ENCODE measurements at regions of chr17 and their contacts with region 1.

Region 1: GRCh38 chr17:72358465-72358864 is 237.6 kb downstream of the SOX9 start:
- DNase-seq: no peak
- H3K4me3 ChIP-seq: no peak overlapping the region
- H3K27ac ChIP-seq: no peak overlapping the region
- H3K27me3 ChIP-seq: peaks cover 0 to 3% (median 0%) of the 10 kb centered on the region in 45 donors
- CTCF ChIP-seq: no peak

Region 2: GRCh38 chr17:72456026-72456569 is 97.6 kb after region 1 on chr17:
- intact Hi-C with region 1: no loop called
- DNase-seq: no peak
- H3K4me3 ChIP-seq: no peak overlapping the region
- H3K27ac ChIP-seq: no peak overlapping the region
- H3K27me3 ChIP-seq: peaks cover 0 to 6% (median 0%) of the 10 kb centered on the region in 45 donors
- CTCF ChIP-seq: no peak

Region 3: GRCh38 chr17:72510397-72511016 is 152.0 kb after region 1 on chr17:
- intact Hi-C with region 1: loop called in 1 of 2 experiments (anchors 10 kb)
- DNase-seq: no peak
- H3K4me3 ChIP-seq: peak overlapping the region in 1 of 59 donors; percentile 5
- H3K27ac ChIP-seq: peak overlapping the region in 53 of 59 donors; percentile 0 to 86 (median 65)
- H3K27me3 ChIP-seq: peaks cover 0 to 7% (median 0%) of the 10 kb centered on the region in 45 donors
- CTCF ChIP-seq: no peak

Region 4: GRCh38 chr17:72764632-72765041 is 406.2 kb after region 1 on chr17:
- intact Hi-C with region 1: no loop called
- DNase-seq: no peak
- H3K4me3 ChIP-seq: no peak overlapping the region
- H3K27ac ChIP-seq: no peak overlapping the region
- H3K27me3 ChIP-seq: no peaks in the 10 kb centered on the region
- CTCF ChIP-seq: no peak

Measured in dorsolateral prefrontal cortex (tissue), 120 donors.